ENCODE measurements at regions of chr4 and their contacts with region 1.

Region 1: DNA sequence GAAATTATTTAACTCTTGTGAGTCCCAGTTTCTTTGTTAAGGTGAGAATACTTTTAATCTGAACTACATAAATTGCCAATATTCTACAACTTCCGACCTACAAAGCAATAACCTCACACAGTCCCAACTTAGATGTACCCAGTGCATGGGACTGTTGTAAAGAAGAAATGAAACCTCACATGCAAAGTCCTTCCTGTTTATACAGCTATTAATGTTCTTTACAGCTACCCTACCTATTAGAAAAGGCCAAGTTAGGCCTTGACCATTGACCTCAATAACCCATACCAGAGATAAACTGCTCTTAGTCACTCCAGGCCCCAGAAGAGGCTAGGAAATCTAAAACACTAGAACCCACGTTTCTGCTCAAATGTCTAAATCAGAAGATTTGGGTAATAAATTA is 920.1 kb upstream of the TENM3 start:
- DNase-seq: no peak
- ATAC-seq: no peak
- H3K4me3 ChIP-seq: no peak overlapping the region
- H3K27ac ChIP-seq: no peak overlapping the region
- H3K4me1 ChIP-seq: no peaks in the 10 kb centered on the region
- H3K27me3 ChIP-seq: no peaks in the 10 kb centered on the region
- CTCF ChIP-seq: no peak

Region 2: GRCh38 chr4:181261279-181261678 is 61.8 kb before region 1 on chr4:
- CTCF ChIA-PET with region 1: no interaction called
- POLR2A ChIA-PET with region 1: interaction called, 17 read pairs
- in situ Hi-C with region 1: no loop called
- intact Hi-C with region 1: no loop called
- DNase-seq: no peak
- ATAC-seq: no peak
- H3K4me3 ChIP-seq: no peak overlapping the region
- H3K27ac ChIP-seq: no peak overlapping the region
- H3K4me1 ChIP-seq: no peaks in the 10 kb centered on the region
- H3K27me3 ChIP-seq: no peaks in the 10 kb centered on the region
- CTCF ChIP-seq: peak; percentile 12; the same call in 1 of the 2 replicates